H1 (cell line): ENCODE measurements at regions of chr5 and their contacts with region 1.

Region 1: DNA sequence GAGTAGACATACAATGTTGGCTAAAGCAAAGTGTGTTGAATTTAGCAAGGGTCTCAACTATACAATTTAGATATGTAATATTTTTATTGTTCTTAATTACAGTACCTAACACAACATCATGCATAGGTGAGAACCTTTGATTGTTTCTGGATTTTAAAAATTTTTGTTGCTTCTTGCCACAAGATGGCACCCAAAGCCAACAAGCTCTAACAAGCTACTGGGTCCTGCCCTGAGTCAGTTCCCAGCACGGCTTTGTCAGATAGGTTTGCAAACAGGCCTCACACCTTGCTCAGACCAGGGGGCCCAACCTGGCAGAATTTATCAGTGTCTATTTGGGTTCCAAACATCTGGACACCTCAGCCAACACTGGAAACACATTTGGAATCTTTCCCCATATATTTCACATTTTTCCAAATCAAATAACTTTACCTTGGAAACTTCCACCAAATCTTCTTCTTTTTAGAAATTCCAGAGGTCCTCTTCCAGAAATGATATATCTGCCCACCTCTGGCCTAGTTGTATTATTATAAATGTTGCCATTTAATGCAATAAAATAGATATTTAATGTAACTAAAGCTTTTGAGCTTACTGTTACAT is 49.5 kb upstream of the EGFLAM start:
- DNase-seq: no peak
- H3K4me3 ChIP-seq: no peak overlapping the region
- H3K27ac ChIP-seq: no peak overlapping the region
- H3K4me1 ChIP-seq: no peaks in the 10 kb centered on the region; a peak in 1 of 7 replicates
- H3K27me3 ChIP-seq: no peaks in the 10 kb centered on the region
- CTCF ChIP-seq: peak; percentile 14 to 76 (median 63)
- EP300 ChIP-seq: no peak
- POLR2A ChIP-seq: no peak
- RAD21 ChIP-seq: peak; percentile 90 to 94

Region 2: GRCh38 chr5:38404667-38405276 is 195.9 kb after region 1 on chr5:
- CTCF ChIA-PET with region 1: interaction called, 11 read pairs
- POLR2A ChIA-PET with region 1: no interaction called
- DNase-seq: peak in 1 of 2 experiments; percentile 61
- H3K4me3 ChIP-seq: no peak overlapping the region
- H3K27ac ChIP-seq: no peak overlapping the region
- H3K4me1 ChIP-seq: no peaks in the 10 kb centered on the region
- H3K27me3 ChIP-seq: no peaks in the 10 kb centered on the region
- CTCF ChIP-seq: peak; percentile 67 to 80 (median 80)
- EP300 ChIP-seq: no peak
- POLR2A ChIP-seq: no peak
- RAD21 ChIP-seq: peak; percentile 78 to 80